HEK293 (cell line): ENCODE measurements at regions of chr5 and their contacts with region 1.

Region 1: GRCh38 chr5:151686674-151687407 is at the start of gene SPARC:
- H3K4me3 ChIP-seq: peak within 1 kb of the TSS; percentile 67
- H3K27ac ChIP-seq: no peak within 1 kb of the TSS; the same call in 1 of the 2 replicates
- H3K4me1 ChIP-seq: peaks cover 6% of the 10 kb centered on the region; the same call in 1 of the 2 replicates
- CTCF ChIP-seq: no peak

Region 2: GRCh38 chr5:151675611-151676313 is 11.1 kb before region 1 on chr5:
- CTCF ChIA-PET with region 1: interaction called, 11 read pairs
- POLR2A ChIA-PET with region 1: interaction called, 7 read pairs
- H3K4me3 ChIP-seq: no peak overlapping the region
- H3K27ac ChIP-seq: no peak overlapping the region
- H3K4me1 ChIP-seq: peaks cover 2% of the 10 kb centered on the region; the same call in 1 of the 2 replicates
- CTCF ChIP-seq: no peak

Region 3: GRCh38 chr5:151699071-151699901 is 12.4 kb after region 1 on chr5:
- CTCF ChIA-PET with region 1: interaction called, 7 read pairs
- POLR2A ChIA-PET with region 1: interaction called, 33 read pairs
- H3K4me3 ChIP-seq: no peak overlapping the region
- H3K27ac ChIP-seq: 0 out of 2 replicates have a peak overlapping the region, but pooled peaks have one; percentile 24
- H3K4me1 ChIP-seq: no peaks in the 10 kb centered on the region
- CTCF ChIP-seq: no peak